Vagina (tissue), 2 donors: ENCODE measurements at regions of chr1 and their contacts with region 1.

Region 1: GRCh38 chr1:163875200-163875926 is 553.6 kb downstream of the NUF2 start:
- DNase-seq: no peak
- H3K4me3 ChIP-seq: peak overlapping the region in 1 of 2 donors; percentile 13
- H3K27ac ChIP-seq: peak overlapping the region; percentile 10
- H3K4me1 ChIP-seq: peaks cover 24% of the 10 kb centered on the region
- H3K27me3 ChIP-seq: no peaks in the 10 kb centered on the region
- CTCF ChIP-seq: no peak
- POLR2A ChIP-seq: no peak

Region 2: GRCh38 chr1:162107911-162108310 is 1767.5 kb before region 1 on chr1:
- intact Hi-C with region 1: loop called (anchors 5 kb)
- DNase-seq: no peak
- H3K4me3 ChIP-seq: no peak overlapping the region
- H3K27ac ChIP-seq: no peak overlapping the region
- H3K4me1 ChIP-seq: no peaks in the 10 kb centered on the region
- H3K27me3 ChIP-seq: no peaks in the 10 kb centered on the region
- CTCF ChIP-seq: no peak
- POLR2A ChIP-seq: no peak

Region 3: GRCh38 chr1:163807061-163808049 is 68.0 kb before region 1 on chr1:
- intact Hi-C with region 1: no loop called
- DNase-seq: no peak
- H3K4me3 ChIP-seq: no peak overlapping the region
- H3K27ac ChIP-seq: no peak overlapping the region
- H3K4me1 ChIP-seq: no peaks in the 10 kb centered on the region
- H3K27me3 ChIP-seq: no peaks in the 10 kb centered on the region
- CTCF ChIP-seq: no peak
- POLR2A ChIP-seq: no peak

Region 4: GRCh38 chr1:163906283-163906682 is 30.9 kb after region 1 on chr1:
- intact Hi-C with region 1: no loop called
- DNase-seq: no peak
- H3K4me3 ChIP-seq: no peak overlapping the region
- H3K27ac ChIP-seq: no peak overlapping the region
- H3K4me1 ChIP-seq: no peaks in the 10 kb centered on the region
- H3K27me3 ChIP-seq: no peaks in the 10 kb centered on the region
- CTCF ChIP-seq: no peak
- POLR2A ChIP-seq: no peak